ENCODE measurements at regions of chr11 and their contacts with region 1.

Region 1: GRCh38 chr11:615504-616319 is at the start of gene IRF7:
- DNase-seq: peak; percentile 91
- H3K4me3 Mint-ChIP-seq: peak within 1 kb of the TSS; percentile 89
- H3K27ac Mint-ChIP-seq: peak within 1 kb of the TSS; percentile 93
- H3K4me1 Mint-ChIP-seq: peaks cover 15% of the 10 kb centered on the region
- H3K27me3 Mint-ChIP-seq: no peaks in the 10 kb centered on the region
- total RNA-seq, gene IRF7: 83.2 to 92.7 TPM

Region 2: DNA sequence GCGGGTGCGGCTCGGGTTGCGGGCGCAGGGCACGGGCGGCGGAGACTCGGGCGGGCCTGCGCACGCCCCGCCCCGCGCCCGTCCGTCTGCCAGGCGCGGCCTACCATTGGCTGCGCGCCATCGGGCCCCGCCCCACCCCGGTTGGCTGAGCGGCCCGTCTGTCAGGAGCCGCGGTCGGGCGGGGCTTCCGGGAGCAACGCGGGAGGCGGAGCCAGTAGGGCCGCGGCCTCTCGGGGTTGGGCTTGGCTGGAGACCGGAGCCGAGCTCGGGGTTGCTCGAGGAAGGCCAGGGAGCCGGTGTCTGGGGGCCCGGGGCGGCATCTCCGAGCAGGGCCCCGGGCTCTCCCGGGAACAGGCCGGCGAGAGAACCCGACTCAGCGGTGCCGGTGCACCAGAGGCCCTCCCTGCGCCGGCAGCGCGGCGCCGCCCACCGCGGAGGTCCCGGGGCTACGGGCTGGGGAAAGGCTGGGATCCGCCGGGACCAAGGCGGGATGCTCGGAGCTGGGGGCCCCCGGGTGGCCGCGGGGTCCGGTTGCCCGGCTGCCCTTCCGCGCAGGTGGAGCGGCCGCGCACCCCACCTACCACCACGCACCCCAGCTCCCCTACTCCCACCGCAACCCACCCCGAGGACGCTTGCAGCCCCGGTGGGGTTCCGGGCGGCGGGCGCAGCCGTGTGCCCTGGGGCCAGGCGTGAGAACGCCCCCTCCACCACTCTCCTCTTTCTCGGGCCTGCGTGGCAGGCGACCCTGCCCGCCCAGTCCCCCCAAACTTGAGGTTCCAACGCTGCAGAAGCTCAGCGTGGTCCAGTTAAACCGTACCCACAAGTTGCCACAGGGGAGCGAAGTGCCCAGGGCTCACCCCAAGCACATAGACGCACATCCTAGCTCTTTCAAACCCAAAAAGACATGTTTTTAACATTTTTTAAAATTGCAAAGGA is 79.9 kb before region 1 on chr11 and contains the start of gene HRAS:
- CTCF ChIA-PET with region 1: no interaction called
- intact Hi-C with region 1: loop called (anchors 2 kb)
- DNase-seq: peak; percentile 94
- H3K4me3 Mint-ChIP-seq: peak within 1 kb of the TSS; percentile 88
- H3K27ac Mint-ChIP-seq: peak within 1 kb of the TSS; percentile 69
- H3K4me1 Mint-ChIP-seq: peaks cover 7% of the 10 kb centered on the region
- H3K27me3 Mint-ChIP-seq: no peaks in the 10 kb centered on the region
- total RNA-seq, gene HRAS: 22.0 to 25.8 TPM

Region 3: GRCh38 chr11:560305-561147 is 55.2 kb before region 1 on chr11 and contains the starts of genes LMNTD2 and RASSF7:
- CTCF ChIA-PET with region 1: no interaction called
- intact Hi-C with region 1: loop called (anchors 2 kb)
- DNase-seq: peak; percentile 95
- H3K4me3 Mint-ChIP-seq: peak within 1 kb of the TSS; percentile 84
- H3K27ac Mint-ChIP-seq: peak within 1 kb of the TSS; percentile 76
- H3K4me1 Mint-ChIP-seq: peaks cover 12% of the 10 kb centered on the region
- H3K27me3 Mint-ChIP-seq: peaks cover 3% of the 10 kb centered on the region
- total RNA-seq, gene LMNTD2: 4.5 to 5.2 TPM
- total RNA-seq, gene RASSF7: 8.3 to 9.9 TPM

Region 4: GRCh38 chr11:575996-576768 is 39.5 kb before region 1 on chr11 and contains the start of gene PHRF1:
- CTCF ChIA-PET with region 1: no interaction called
- intact Hi-C with region 1: loop called (anchors 2 kb)
- DNase-seq: peak; percentile 96
- H3K4me3 Mint-ChIP-seq: peak within 1 kb of the TSS; percentile 88
- H3K27ac Mint-ChIP-seq: peak within 1 kb of the TSS; percentile 99
- H3K4me1 Mint-ChIP-seq: peaks cover 48% of the 10 kb centered on the region
- H3K27me3 Mint-ChIP-seq: peaks cover 6% of the 10 kb centered on the region
- total RNA-seq, gene PHRF1: 25.6 to 26.1 TPM

Region 5: GRCh38 chr11:587978-588380 is 27.7 kb before region 1 on chr11:
- CTCF ChIA-PET with region 1: no interaction called
- intact Hi-C with region 1: loop called (anchors 1 kb)
- DNase-seq: peak; percentile 87
- H3K4me3 Mint-ChIP-seq: peak overlapping the region; percentile 70
- H3K27ac Mint-ChIP-seq: peak overlapping the region; percentile 99
- H3K4me1 Mint-ChIP-seq: peaks cover 25% of the 10 kb centered on the region
- H3K27me3 Mint-ChIP-seq: no peaks in the 10 kb centered on the region

Region 6: DNA sequence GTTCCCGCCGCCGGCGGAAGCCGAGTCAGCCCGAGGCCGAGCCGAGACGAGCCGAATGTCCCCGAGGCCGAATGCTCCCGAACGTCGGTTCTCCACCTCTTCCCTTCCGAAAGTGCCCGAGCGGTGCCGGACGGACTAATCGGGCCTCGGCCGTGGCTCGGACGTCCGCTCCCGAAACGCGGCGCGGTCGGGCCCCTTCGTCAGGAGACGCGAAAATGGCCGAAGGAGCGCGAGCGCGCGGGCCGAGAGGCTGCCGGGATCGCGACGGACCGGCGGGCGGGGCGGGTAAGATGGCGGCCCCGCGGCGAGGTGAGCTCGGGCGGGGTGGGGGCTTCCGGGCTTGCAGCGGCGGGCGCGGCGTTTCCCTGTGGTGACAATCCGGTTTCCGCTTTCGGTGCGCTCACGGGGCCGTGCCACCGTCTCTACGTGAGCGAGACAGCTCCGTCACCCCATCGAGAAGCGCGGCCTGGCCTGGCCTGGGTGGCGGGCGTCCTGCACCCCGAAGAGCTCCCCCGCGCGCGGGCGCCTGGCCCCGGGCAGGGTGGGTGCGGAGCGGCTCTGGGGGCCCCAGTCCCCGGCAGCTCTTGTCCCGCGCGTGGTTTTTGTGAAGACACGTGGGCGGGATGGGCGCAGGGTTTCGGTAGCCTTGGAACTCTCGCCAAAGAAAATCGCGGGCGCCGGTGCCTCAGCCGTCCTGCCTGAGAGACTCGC is 80.0 kb after region 1 on chr11 and contains the start of gene TMEM80:
- CTCF ChIA-PET with region 1: no interaction called
- intact Hi-C with region 1: loop called (anchors 1 kb)
- DNase-seq: peak; percentile 99
- H3K4me3 Mint-ChIP-seq: peak within 1 kb of the TSS; percentile 83
- H3K27ac Mint-ChIP-seq: peak within 1 kb of the TSS; percentile 93
- H3K4me1 Mint-ChIP-seq: peaks cover 54% of the 10 kb centered on the region
- H3K27me3 Mint-ChIP-seq: no peaks in the 10 kb centered on the region
- total RNA-seq, gene TMEM80: 5.6 to 6.0 TPM

Measured in activated naive CD4-positive, alpha-beta T cell treated with anti-CD3 and anti-CD28 coated beads for 36 hours (primary cell).